GM13976 (cell line): ENCODE measurements at regions of chr1 and their contacts with region 1.

Region 1: GRCh38 chr1:35564037-35564883 is 6.7 kb downstream of the NCDN start:
- DNase-seq: peak; percentile 87
- CTCF ChIP-seq: peak; percentile 83

Region 2: GRCh38 chr1:35451125-35451528 is 113.1 kb before region 1 on chr1:
- in situ Hi-C with region 1: loop called (anchors 5 kb)
- DNase-seq: peak; percentile 64
- CTCF ChIP-seq: peak; percentile 89